Panc1 (cell line): ENCODE measurements at regions of chr19 and their contacts with region 1.

Region 1: DNA sequence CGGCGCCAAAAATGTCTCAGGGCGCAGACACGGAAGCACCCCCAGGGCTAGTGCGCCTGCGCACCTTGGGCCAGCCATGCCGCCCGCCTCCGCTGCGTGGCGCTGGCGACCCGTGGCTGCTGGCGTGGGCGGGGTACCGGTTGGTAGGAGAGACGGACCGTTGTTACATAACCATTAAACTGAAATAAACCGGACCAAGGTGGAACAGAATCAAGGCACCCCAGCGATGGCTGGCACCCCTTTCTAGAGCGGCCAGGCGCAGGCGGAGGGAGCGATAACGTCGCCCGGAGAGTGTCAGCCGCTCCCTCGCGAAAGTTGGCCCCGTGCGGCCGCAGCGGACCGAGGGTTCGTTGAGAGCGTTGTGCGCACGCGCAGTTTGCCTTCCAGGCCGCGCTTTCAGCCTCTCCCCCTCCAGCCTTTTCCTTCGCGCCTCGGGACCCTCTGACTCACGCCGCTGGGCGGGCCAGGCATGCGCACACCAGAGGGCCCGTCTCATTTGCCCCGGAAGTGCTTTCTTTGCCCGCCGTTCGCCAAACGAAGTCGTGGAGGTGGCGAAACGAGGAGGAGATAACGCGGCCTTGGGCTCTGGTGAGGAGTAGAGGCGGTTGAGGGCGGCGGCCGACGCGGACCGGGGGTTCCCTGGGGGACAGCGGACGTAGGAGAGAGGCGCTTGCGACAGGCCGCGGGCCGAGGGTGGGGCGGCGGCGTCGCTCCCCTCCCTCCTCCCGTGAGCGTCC is at the starts of genes PLEKHJ1 and SF3A2:
- DNase-seq: peak; percentile 86
- ATAC-seq: peak; percentile 78
- H3K4me3 ChIP-seq: peak within 1 kb of the TSS; percentile 75 to 83
- H3K27ac ChIP-seq: peak within 1 kb of the TSS; percentile 89
- H3K4me1 ChIP-seq: peaks cover 36% of the 10 kb centered on the region
- H3K27me3 ChIP-seq: no peaks in the 10 kb centered on the region
- CTCF ChIP-seq: peak; percentile 98
- total RNA-seq, gene PLEKHJ1: 78.6 TPM
- total RNA-seq, gene SF3A2: 103 TPM

Region 2: GRCh38 chr19:1945899-1946298 is 290.6 kb before region 1 on chr19:
- CTCF ChIA-PET with region 1: no interaction called
- POLR2A ChIA-PET with region 1: interaction called, 15 read pairs
- in situ Hi-C with region 1: no loop called
- intact Hi-C with region 1: no loop called
- DNase-seq: no peak
- ATAC-seq: no peak
- H3K4me3 ChIP-seq: no peak overlapping the region
- H3K27ac ChIP-seq: no peak overlapping the region
- H3K4me1 ChIP-seq: peaks cover 10% of the 10 kb centered on the region; the same call in 1 of the 2 replicates
- H3K27me3 ChIP-seq: no peaks in the 10 kb centered on the region
- CTCF ChIP-seq: peak; percentile 78; the same call in 1 of the 2 replicates

Region 3: DNA sequence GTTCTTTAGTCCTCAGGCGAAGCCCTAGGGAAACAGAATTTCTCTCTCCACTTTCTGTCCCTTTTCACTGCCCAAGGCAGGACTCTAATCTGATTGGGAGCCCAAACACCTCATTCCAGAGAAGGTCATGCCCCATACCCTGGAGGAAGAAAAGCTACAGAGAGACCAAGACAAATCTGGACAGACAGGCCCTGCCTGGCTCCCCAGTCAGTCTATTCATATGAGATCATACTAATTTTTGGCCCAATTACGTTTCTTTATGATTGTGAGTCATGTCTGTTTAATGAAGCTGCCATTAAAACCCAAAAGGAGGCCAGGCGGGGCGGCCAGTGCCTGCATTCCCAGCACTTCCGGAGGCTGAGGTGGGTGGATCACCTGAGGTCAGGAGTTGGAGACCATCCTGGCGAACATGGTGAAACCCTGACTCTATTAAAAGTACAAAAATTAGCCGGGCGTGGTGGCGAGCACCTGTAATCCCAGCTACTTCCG is 81.9 kb before region 1 on chr19:
- CTCF ChIA-PET with region 1: interaction called, 8 read pairs
- POLR2A ChIA-PET with region 1: no interaction called
- in situ Hi-C with region 1: no loop called
- intact Hi-C with region 1: loop called (anchors 5 kb)
- DNase-seq: no peak
- ATAC-seq: no peak
- H3K4me3 ChIP-seq: no peak overlapping the region
- H3K27ac ChIP-seq: no peak overlapping the region
- H3K4me1 ChIP-seq: peaks cover under 1% of the 10 kb centered on the region; the same call in 1 of the 2 replicates
- H3K27me3 ChIP-seq: no peaks in the 10 kb centered on the region
- CTCF ChIP-seq: no peak

Region 4: DNA sequence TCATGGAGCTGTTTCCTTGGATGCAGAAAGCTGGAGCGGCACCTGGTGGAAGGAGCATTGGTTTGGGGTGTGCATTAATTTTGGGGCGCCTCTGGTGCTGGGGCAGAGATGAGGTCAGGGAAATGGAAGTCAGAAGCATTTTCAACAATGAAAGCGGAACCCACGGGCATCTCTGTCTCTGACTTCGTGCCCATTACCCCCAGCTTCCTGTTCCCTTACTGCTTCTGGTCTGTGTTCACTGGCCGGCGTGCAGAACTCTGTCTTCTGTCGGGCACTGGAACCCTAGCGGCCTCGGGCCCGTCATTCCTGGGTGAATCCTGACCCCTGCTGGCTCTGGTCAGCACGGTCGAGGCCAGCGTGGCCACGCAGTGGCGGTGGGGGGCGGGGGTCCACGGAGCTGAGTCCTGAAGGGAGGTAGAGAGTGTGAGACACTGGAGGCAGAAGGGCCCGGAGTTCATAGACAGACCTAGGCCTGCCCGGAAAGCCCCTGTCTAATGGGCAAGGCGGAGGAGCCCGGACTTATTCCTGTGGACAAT is 79.4 kb after region 1 on chr19:
- CTCF ChIA-PET with region 1: no interaction called
- POLR2A ChIA-PET with region 1: interaction called, 16 read pairs
- in situ Hi-C with region 1: no loop called
- intact Hi-C with region 1: loop called (anchors 5 kb)
- DNase-seq: no peak
- ATAC-seq: peak; percentile 93
- H3K4me3 ChIP-seq: 0 out of 4 replicates have a peak overlapping the region, but pooled peaks of 1 of the 2 experiments have one; percentile 6
- H3K27ac ChIP-seq: no peak overlapping the region
- H3K4me1 ChIP-seq: no peaks in the 10 kb centered on the region; the same call in 1 of the 2 replicates
- H3K27me3 ChIP-seq: no peaks in the 10 kb centered on the region
- CTCF ChIP-seq: peak; percentile 81

Region 5: GRCh38 chr19:3062168-3063102 is 826.0 kb after region 1 on chr19 and contains the start of gene TLE5:
- CTCF ChIA-PET with region 1: no interaction called
- POLR2A ChIA-PET with region 1: interaction called, 19 read pairs
- in situ Hi-C with region 1: no loop called
- intact Hi-C with region 1: no loop called
- DNase-seq: no peak
- ATAC-seq: peak; percentile 80
- H3K4me3 ChIP-seq: peak within 1 kb of the TSS; percentile 64 to 66
- H3K27ac ChIP-seq: peak within 1 kb of the TSS; percentile 83; the same call in 1 of the 2 replicates
- H3K4me1 ChIP-seq: peaks cover 16% of the 10 kb centered on the region
- H3K27me3 ChIP-seq: no peaks in the 10 kb centered on the region
- CTCF ChIP-seq: no peak
- total RNA-seq, gene TLE5: 287 TPM